Cardiac septum (tissue), 1 donor: ENCODE measurements at regions of chr19 and their contacts with region 1.

Region 1: GRCh38 chr19:34772697-34773554 is at the start of gene ZNF599:
- DNase-seq: peak; percentile 95
- total RNA-seq, gene ZNF599: 5.4 TPM

Region 2: DNA sequence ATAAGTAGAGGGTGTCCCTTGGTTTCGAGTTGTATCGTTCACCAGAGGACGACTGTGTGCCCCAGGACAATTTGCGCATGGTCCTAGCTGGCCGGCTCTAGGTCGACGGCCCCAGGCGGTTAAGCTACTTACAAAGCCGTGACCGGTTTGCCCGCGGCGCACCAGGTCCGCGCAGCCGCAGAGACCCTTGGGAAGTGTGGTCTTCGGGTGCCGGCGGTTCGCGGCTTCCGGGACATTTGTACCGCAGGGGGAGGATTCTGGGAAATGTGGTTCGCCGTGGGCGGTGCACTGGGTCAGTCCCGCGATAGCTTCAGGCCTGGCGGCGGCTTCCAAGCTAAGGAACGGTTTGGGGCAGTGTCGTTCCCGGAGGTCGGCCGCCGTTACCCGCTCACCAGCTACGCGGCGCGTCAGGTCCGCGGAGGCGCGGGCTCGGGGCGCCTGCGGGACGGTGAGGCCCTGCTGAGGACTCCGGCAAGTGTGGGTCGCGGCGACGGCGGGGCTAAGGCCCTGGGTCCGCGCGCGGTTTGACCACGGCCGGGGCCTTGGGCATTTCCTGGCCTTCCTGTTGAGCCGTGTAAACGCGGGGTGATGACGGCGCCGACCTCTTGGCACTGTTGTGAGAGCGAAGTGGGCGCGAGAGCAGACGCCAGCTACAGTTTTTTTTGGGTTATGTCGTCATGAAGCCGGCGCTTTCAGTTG is 95.4 kb before region 1 on chr19 and contains the start of gene ZNF302:
- intact Hi-C with region 1: loop called (anchors 2 kb)
- DNase-seq: peak; percentile 97
- total RNA-seq, gene ZNF302: 32.6 TPM

Region 3: GRCh38 chr19:34733826-34734600 is 38.9 kb before region 1 on chr19 and contains the start of gene ZNF181:
- intact Hi-C with region 1: loop called (anchors 2 kb)
- DNase-seq: peak; percentile 93
- total RNA-seq, gene ZNF181: 19.3 TPM

Region 4: DNA sequence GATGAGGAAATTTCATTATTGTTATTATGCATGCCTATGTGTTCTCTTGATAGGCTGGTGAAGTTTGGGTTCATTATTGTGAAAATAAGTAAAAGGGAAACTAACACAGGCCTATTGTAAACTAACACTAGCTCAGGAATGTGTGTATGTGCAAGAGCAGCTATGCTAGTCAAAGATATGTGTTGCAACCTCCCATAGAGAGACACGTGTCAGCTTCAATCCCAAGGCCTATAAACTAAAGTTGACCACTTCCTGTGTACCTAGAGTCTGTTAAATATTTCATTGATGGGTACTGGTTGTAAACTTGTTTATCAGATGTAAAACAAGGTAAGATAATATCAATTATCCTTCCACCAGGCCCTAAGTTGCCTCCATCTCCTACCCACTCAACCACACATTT is 109.1 kb after region 1 on chr19:
- intact Hi-C with region 1: no loop called
- DNase-seq: no peak

Region 5: DNA sequence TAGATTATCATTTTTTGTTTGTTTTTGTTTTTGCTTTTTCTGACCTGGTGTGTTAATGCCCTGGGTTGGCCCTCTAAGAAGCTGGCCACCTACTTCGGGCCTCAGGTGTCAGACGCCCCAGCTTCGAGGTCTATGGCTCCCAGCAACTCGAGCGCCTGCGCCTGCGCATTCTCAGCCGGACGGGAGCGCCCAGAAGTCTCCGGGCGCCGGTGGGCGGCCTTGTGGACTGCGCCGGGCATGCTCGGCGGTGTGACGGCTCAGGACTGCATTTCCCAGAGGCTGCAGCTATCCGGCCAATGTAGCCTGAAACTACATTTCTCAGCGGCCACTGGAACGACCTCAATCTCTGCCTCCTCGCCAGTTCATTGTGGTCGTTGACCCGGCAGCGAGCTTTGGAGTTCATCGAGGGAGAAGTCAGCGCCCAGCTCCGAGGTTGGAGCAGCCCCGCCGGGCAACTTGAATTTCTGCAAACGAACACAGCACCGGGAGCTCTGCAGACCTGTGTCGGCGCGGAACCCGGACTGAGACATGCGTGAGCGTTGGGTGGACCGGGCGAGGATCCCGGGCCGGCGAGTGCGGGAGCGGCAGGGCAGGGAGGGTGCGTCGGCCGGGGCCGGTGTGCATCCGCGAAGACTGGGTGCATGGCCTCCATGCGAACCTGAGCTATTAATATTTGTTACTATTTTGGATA is 153.9 kb after region 1 on chr19 and contains the start of gene ZNF30:
- intact Hi-C with region 1: loop called (anchors 2 kb)
- DNase-seq: peak; percentile 93
- total RNA-seq, gene ZNF30: 2.4 TPM